Right cardiac atrium (tissue), 5 donors: ENCODE measurements at regions of chr1 and their contacts with region 1.

Region 1: GRCh38 chr1:200802865-200803512 is 64.3 kb downstream of the CAMSAP2 start:
- DNase-seq: peak; percentile 62 to 86 (median 72)
- ATAC-seq: peak; percentile 80 to 85
- H3K4me3 ChIP-seq: no peak overlapping the region
- H3K27ac ChIP-seq: no peak overlapping the region
- H3K4me1 ChIP-seq: no peaks in the 10 kb centered on the region
- H3K27me3 ChIP-seq: no peaks in the 10 kb centered on the region

Region 2: DNA sequence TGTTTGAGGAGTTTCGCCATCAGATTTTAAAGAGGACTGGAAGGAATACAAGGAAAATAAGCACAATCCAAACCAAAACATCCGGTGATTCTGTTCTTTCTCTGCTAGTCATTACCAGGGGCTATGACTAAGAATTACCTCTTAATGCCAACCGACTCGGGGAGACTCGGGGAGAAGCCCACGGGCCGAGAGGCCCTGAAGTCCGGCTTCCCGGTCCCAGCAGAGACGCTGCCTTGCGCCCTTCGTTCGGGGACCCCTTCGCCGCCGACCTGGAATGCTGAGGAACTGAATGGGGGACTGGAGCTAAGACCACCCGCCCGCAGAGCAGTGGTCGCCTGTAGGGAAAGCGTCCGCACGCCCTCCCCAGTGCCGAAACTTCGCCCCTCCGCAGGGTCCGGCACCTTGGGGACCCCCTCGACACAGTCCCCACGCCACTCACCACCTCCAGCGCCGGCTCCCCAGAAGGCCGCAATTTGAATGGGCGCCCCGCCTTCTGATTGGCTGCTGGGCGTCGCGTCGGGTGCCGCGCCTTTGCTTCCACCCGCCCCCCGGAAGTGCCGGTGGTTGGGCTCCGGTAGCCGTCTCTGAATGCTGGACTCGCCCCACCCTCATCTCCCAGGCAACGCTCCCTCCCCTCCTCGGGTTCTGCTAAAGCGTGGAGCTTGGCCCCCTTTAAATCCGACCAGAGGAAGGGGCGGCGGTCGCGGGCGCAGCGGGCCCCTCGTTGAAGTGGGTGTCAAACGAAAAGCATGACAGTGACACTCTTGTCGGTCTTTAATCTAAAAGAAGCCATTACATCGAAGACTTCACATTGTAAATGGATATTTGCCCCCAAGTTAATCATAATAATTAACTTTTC is 182.5 kb before region 1 on chr1 and contains the start of gene KIF14:
- intact Hi-C with region 1: loop called (anchors 5 to 10 kb)
- DNase-seq: peak; percentile 95 to 97 (median 96)
- ATAC-seq: peak; percentile 99 to 100
- H3K4me3 ChIP-seq: peak within 1 kb of the TSS; percentile 65
- H3K27ac ChIP-seq: no peak within 1 kb of the TSS
- H3K4me1 ChIP-seq: no peaks in the 10 kb centered on the region
- H3K27me3 ChIP-seq: no peaks in the 10 kb centered on the region
- total RNA-seq, gene KIF14: 0.08 to 0.37 (median 0.19) TPM

Region 3: DNA sequence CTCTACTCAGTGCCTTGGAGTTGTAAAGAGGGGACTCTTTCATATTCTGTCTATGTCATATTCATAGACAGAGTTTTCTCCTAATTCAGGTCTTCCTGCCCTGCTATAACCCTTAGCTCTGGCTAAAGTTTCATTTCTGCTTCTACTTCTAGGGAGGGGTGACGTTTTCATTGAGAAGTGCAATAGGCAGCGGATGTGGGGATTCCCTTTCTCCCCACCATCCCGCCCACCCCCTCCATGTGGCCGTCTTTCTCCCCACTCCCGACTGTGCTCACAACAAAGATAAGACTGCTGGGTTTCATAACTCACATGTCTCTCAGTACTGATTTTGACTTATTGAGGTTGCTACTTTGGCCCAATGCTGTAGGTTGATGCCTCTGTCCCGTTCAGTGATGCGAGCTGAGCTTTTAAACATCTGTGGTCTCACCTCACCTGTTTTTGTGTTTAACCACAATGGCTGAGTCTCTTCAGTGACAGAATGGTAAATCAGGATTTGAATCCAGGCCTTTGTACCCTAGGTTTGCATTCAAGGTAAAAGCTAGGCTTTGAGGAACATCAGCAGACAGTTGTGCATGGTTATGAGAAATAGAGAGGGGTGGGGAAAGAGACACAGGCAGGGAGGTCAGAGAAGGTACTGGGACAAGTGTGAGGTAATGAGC is 174.6 kb before region 1 on chr1:
- intact Hi-C with region 1: loop called (anchors 5 to 10 kb)
- DNase-seq: no peak
- ATAC-seq: no peak
- H3K4me3 ChIP-seq: no peak overlapping the region
- H3K27ac ChIP-seq: no peak overlapping the region
- H3K4me1 ChIP-seq: no peaks in the 10 kb centered on the region
- H3K27me3 ChIP-seq: no peaks in the 10 kb centered on the region

Region 4: DNA sequence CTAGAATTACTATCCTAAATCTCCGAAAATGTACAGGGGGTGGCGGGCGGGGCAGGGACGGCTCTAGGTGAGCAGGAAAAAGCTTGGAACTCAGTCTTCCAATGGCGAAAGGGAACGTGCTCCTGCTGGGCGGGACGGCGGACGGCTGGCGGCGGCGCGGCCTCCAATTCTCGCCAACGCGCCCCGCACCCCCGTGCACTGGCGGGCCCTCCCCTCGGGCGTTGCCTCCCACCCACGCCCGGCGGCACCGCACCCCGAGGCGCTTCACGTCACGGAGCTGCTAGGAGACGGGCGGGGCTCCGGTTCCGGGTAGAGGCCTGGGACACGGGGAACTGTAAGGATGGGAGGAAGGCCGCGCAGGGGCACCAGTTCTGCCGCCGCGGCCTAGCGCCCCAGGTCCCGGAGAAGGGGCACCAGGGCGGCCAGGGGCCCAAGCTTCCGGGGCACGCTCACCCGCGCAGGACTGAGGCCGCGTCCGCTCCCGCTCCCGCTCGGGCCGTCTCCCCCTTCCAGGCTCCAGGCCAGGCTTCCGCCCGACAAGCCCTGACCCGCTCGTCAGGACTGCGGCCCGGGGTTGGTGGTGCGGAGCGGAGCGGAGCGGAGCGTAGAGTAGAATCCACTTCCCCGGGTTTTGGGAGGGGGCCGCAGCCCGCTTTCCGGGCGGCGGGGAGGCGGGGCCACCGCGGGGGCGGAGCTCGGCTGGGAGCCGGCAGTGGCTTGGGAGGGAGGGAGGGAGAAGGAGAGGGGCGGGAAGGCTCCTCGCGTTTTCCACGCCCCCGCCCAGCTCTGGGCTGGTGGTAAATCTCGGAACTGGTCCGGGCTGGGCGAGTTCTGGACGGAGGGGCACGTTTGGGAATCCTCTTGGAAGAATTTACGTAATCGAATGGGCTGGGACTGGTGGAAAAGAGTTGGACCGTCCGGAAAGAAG is 133.4 kb before region 1 on chr1 and contains the start of gene DDX59:
- intact Hi-C with region 1: loop called in 1 of 4 experiments (anchors 10 kb)
- DNase-seq: peak; percentile 97 to 98 (median 98)
- ATAC-seq: peak; percentile 98
- H3K4me3 ChIP-seq: peak within 1 kb of the TSS; percentile 64
- H3K27ac ChIP-seq: peak within 1 kb of the TSS; percentile 96
- H3K4me1 ChIP-seq: peaks cover 4% of the 10 kb centered on the region
- H3K27me3 ChIP-seq: no peaks in the 10 kb centered on the region
- total RNA-seq, gene DDX59: 11.0 to 14.9 (median 12.8) TPM